H1 (cell line): ENCODE measurements at regions of chr6 and their contacts with region 1.

Region 1: DNA sequence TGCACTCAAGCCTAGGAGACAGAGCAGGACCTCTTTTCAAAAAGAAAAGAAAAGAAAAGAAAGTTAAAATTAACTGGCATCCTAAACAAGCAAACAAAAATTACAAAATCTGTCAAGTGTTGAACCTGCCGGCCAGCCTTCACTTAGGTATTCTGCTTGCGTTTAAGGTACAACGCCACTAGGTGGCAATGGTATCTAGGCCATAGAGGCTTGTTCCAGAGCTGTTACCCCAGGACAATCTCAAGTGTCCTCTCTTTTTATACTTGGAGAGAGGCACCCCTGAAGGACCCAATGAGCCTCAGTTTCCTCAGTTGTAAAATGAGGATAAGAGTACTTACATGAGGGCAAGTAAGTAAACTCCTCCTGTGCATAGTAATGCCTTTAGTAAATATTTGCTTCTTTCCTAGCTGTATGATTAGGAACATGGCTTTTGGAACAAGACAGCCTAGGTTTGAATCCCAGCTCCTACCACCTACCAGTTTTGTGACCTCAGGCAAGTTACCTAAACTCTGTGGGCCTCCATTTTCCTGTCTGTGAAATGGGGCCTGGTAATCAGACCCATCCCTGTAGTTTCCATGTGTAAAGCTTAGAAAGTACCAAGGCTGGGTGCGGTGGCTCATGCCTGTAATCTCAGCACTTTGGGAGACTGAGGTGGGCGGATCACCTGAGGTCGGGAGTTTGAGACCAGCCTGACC is 5.8 kb upstream of the PACSIN1 start:
- DNase-seq: peak in 1 of 2 experiments; percentile 59
- H3K4me3 ChIP-seq: no peak overlapping the region
- H3K27ac ChIP-seq: no peak overlapping the region
- H3K4me1 ChIP-seq: peaks cover 0 to 19% (median 6%) of the 10 kb centered on the region in 4 experiments; a peak in 6 of 7 replicates
- H3K27me3 ChIP-seq: peaks cover 0 to under 1% (median under 1%) of the 10 kb centered on the region in 4 experiments; a peak in 3 of 7 replicates
- CTCF ChIP-seq: peak in 2 of 3 experiments; percentile 84 to 88; a peak in 3 of 4 replicates
- EP300 ChIP-seq: no peak
- POLR2A ChIP-seq: no peak
- RAD21 ChIP-seq: peak; percentile 97 to 98

Region 2: GRCh38 chr6:34273242-34273805 is 186.7 kb before region 1 on chr6:
- CTCF ChIA-PET with region 1: no interaction called
- POLR2A ChIA-PET with region 1: no interaction called
- DNase-seq: no peak
- H3K4me3 ChIP-seq: no peak overlapping the region
- H3K27ac ChIP-seq: no peak overlapping the region
- H3K4me1 ChIP-seq: no peaks in the 10 kb centered on the region
- H3K27me3 ChIP-seq: no peaks in the 10 kb centered on the region
- CTCF ChIP-seq: no peak
- EP300 ChIP-seq: no peak
- POLR2A ChIP-seq: no peak
- RAD21 ChIP-seq: no peak

Region 3: GRCh38 chr6:34425498-34426410 is 34.3 kb before region 1 on chr6 and contains the start of gene RPS10:
- CTCF ChIA-PET with region 1: interaction called, 6 read pairs
- POLR2A ChIA-PET with region 1: interaction called, 10 read pairs
- DNase-seq: peak; percentile 75 to 97
- H3K4me3 ChIP-seq: peak within 1 kb of the TSS; percentile 91 to 99 (median 95)
- H3K27ac ChIP-seq: peak within 1 kb of the TSS; percentile 92
- H3K4me1 ChIP-seq: peaks cover 0 to 11% (median 4%) of the 10 kb centered on the region in 4 experiments; a peak in 5 of 7 replicates
- H3K27me3 ChIP-seq: no peaks in the 10 kb centered on the region
- CTCF ChIP-seq: no peak
- EP300 ChIP-seq: no peak
- POLR2A ChIP-seq: peak; percentile 93 to 96
- RAD21 ChIP-seq: 0 out of 4 replicates have a peak, but pooled peaks have one; percentile 3 to 16
- total RNA-seq, gene RPS10: 2,408 and 2,434 TPM in 2 replicates

Region 4: GRCh38 chr6:34447910-34448309 is 12.1 kb before region 1 on chr6:
- CTCF ChIA-PET with region 1: interaction called, 31 read pairs
- POLR2A ChIA-PET with region 1: no interaction called
- DNase-seq: peak in 1 of 2 experiments; percentile 75
- H3K4me3 ChIP-seq: no peak overlapping the region
- H3K27ac ChIP-seq: no peak overlapping the region
- H3K4me1 ChIP-seq: peaks cover 0 to 5% (median 0%) of the 10 kb centered on the region in 4 experiments; a peak in 2 of 7 replicates
- H3K27me3 ChIP-seq: no peaks in the 10 kb centered on the region
- CTCF ChIP-seq: no peak
- EP300 ChIP-seq: no peak
- POLR2A ChIP-seq: no peak
- RAD21 ChIP-seq: no peak

Region 5: DNA sequence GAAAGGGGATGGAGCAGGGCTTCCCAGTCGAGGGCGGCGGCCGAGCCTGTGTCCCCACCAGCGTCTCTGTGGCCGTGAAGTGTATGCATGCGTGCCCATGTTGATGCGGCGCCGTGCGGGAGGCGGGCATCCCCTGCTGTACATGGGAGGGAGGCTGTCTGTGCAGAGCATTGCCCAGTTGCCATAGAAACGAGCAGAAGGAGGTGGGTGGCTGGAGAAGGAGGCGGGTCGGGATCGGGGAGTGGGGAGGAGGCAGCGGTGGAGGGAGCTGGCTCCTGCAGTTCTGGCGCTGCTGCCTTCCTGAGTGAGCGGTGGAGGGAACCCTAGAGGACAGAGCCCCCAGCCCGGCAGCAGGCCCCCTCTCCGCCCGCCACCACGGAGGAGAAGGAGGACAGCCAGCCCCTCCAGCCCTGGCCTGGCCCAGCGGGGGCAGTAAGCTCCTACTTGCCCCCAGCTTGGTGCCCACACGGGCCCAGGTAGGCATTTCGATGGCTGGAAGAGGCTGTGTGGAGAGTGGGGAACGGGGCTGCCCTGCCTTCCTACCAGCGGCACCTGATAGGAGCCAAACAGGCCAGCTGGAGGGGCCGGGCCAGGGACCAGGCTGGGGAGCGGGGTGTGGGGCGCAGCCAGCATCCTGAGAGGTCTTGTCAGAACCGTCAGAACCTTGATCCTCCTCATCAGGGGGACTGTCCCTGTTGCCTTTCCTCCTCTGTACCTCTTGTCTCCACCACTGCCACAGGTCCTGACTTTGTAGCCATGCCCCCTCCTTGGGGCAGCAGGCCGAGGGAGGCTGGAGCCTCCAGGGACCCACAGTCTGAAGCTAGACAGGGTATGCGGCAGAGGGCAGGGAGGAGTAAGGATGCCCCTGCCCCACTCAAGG is 54.8 kb after region 1 on chr6:
- CTCF ChIA-PET with region 1: interaction called, 10 read pairs
- POLR2A ChIA-PET with region 1: no interaction called
- DNase-seq: peak in 1 of 2 experiments; percentile 74
- H3K4me3 ChIP-seq: peak overlapping the region; percentile 24 to 70 (median 64)
- H3K27ac ChIP-seq: no peak overlapping the region
- H3K4me1 ChIP-seq: peaks cover 0 to 17% (median 9%) of the 10 kb centered on the region in 4 experiments; a peak in 5 of 7 replicates
- H3K27me3 ChIP-seq: peaks cover 0 to 6% (median 1%) of the 10 kb centered on the region in 4 experiments; a peak in 2 of 7 replicates
- CTCF ChIP-seq: no peak
- EP300 ChIP-seq: no peak
- POLR2A ChIP-seq: no peak
- RAD21 ChIP-seq: no peak

Region 6: GRCh38 chr6:34536251-34536950 is 76.4 kb after region 1 on chr6:
- CTCF ChIA-PET with region 1: interaction called, 14 read pairs
- POLR2A ChIA-PET with region 1: interaction called, 11 read pairs
- DNase-seq: no peak
- H3K4me3 ChIP-seq: no peak overlapping the region
- H3K27ac ChIP-seq: no peak overlapping the region
- H3K4me1 ChIP-seq: peaks cover 0 to 4% (median 2%) of the 10 kb centered on the region in 4 experiments; a peak in 4 of 7 replicates
- H3K27me3 ChIP-seq: no peaks in the 10 kb centered on the region
- CTCF ChIP-seq: no peak
- EP300 ChIP-seq: no peak
- POLR2A ChIP-seq: no peak
- RAD21 ChIP-seq: no peak

Region 7: DNA sequence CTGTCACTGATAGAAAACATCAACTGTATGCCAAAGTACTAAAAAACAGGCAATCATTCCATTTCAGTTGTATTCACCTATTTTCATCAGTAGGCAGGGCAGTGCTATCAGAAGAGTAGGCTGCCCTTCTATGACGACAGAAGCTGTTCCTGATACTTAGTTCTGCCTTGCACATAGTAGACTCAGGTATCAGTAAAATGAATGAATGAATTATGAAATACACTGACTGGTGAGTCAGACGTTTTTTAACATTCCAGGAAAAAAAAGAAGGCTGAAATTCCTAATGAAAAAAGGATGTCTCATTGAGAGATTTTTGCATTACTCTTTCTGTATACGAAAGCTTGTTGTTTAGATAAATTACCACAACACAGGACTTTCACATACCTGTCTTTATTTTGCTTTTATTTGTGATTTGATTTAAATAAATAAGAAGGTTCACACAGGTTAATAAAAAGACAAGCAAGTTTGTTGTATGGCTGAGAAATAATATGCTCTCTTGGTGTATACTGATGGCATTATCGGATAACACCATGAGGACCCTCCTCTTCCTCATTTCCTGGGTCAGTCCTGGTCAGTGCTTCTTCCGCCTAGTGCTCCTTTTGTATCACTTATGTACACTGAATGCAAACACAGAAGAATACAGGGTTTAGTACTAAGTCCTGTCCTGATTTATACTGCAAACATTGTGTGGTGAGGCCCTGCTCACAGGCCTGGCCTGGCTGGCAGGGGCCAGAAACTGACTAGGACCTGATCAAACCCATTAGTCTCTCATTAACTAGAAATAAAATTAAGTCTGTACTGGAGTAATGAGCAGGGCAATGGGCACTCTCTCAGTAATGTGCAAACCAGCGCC is 135.5 kb after region 1 on chr6:
- CTCF ChIA-PET with region 1: interaction called, 18 read pairs
- POLR2A ChIA-PET with region 1: no interaction called
- DNase-seq: no peak
- H3K4me3 ChIP-seq: no peak overlapping the region
- H3K27ac ChIP-seq: no peak overlapping the region; the same call in 1 of the 2 replicates
- H3K4me1 ChIP-seq: peaks cover 0 to 5% (median 0%) of the 10 kb centered on the region in 4 experiments; a peak in 2 of 7 replicates
- H3K27me3 ChIP-seq: no peaks in the 10 kb centered on the region
- CTCF ChIP-seq: no peak
- EP300 ChIP-seq: no peak
- POLR2A ChIP-seq: no peak
- RAD21 ChIP-seq: no peak